CD4-positive, alpha-beta memory T cell (primary cell): ENCODE measurements at regions of chr2 and their contacts with region 1.

Region 1: GRCh38 chr2:98664327-98664726 is 55.9 kb downstream of the UNC50 start:
- DNase-seq: peak; percentile 71 to 81 (median 78)
- H3K4me3 ChIP-seq: peak overlapping the region in 1 of 2 donors; percentile 54
- H3K4me3 Mint-ChIP-seq: peak overlapping the region; percentile 59 to 91 (median 84)
- H3K27ac ChIP-seq: peak overlapping the region; percentile 51
- H3K27ac Mint-ChIP-seq: peak overlapping the region; percentile 85 to 99 (median 92)
- H3K4me1 ChIP-seq: peaks cover 74% of the 10 kb centered on the region
- H3K4me1 Mint-ChIP-seq: peaks cover 52 to 91% (median 69%) of the 10 kb centered on the region in 4 donors
- H3K27me3 ChIP-seq: no peaks in the 10 kb centered on the region
- H3K27me3 Mint-ChIP-seq: no peaks in the 10 kb centered on the region

Region 2: GRCh38 chr2:98577313-98577712 is 87.0 kb before region 1 on chr2:
- CTCF ChIA-PET with region 1: no interaction called
- POLR2A ChIA-PET with region 1: no interaction called
- intact Hi-C with region 1: no loop called
- DNase-seq: no peak
- H3K4me3 ChIP-seq: no peak overlapping the region
- H3K4me3 Mint-ChIP-seq: no peak overlapping the region
- H3K27ac ChIP-seq: no peak overlapping the region
- H3K27ac Mint-ChIP-seq: peak overlapping the region in 4 of 7 donors; percentile 11 to 46 (median 30)
- H3K4me1 ChIP-seq: no peaks in the 10 kb centered on the region
- H3K4me1 Mint-ChIP-seq: peaks cover 0 to 1% (median 0%) of the 10 kb centered on the region in 4 donors
- H3K27me3 ChIP-seq: no peaks in the 10 kb centered on the region
- H3K27me3 Mint-ChIP-seq: no peaks in the 10 kb centered on the region

Region 3: DNA sequence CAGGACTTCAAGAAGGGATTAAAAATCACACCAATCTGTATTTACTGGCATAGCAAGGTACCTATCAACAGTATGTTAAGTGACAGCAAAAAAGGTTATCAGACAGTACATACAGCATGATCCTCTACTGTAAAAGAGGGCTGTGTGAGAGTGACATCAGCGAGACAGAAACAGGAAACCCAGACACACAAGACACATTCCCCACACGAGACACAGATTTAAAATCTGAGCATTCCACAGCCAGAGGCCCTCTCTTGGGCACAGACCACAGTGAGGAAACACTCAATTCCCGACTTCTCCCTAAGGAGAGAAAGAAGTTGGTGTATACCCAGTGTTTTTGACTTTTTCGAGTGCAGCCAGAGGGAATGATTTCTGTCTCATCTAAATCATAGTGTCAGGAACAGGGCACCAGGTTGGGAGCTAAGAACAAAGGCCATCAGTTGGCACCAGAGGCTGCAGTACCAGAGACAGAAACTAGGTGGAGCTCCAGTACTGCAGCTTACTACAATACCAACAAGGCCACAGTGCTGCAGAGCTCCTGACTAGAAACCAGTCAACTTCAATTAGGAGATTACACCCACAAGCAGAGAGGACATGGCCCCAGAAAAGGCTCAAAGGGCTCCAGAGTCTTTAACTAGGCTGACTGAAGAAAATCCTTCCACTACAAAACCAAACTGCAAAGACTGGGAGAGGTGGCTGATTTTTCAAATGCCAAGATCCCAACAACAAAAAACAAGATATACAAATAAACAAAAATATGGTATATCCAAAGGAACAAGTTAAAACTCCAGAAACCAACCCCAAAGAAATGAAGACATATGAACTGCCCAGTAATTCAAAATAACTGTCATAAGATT is 15.0 kb before region 1 on chr2:
- CTCF ChIA-PET with region 1: interaction called, 8 read pairs
- POLR2A ChIA-PET with region 1: interaction called, 12 read pairs
- intact Hi-C with region 1: loop called (anchors 1 kb)
- DNase-seq: peak; percentile 79 to 85 (median 81)
- H3K4me3 ChIP-seq: no peak overlapping the region
- H3K4me3 Mint-ChIP-seq: peak overlapping the region in 5 of 8 donors; percentile 10 to 73 (median 33)
- H3K27ac ChIP-seq: peak overlapping the region; percentile 10
- H3K27ac Mint-ChIP-seq: peak overlapping the region; percentile 66 to 89 (median 84)
- H3K4me1 ChIP-seq: peaks cover 52% of the 10 kb centered on the region
- H3K4me1 Mint-ChIP-seq: peaks cover 45 to 60% (median 54%) of the 10 kb centered on the region in 4 donors
- H3K27me3 ChIP-seq: no peaks in the 10 kb centered on the region
- H3K27me3 Mint-ChIP-seq: no peaks in the 10 kb centered on the region

Region 4: GRCh38 chr2:98674233-98674964 is 10.1 kb after region 1 on chr2:
- CTCF ChIA-PET with region 1: no interaction called
- POLR2A ChIA-PET with region 1: interaction called, 18 read pairs
- intact Hi-C with region 1: no loop called
- DNase-seq: no peak
- H3K4me3 ChIP-seq: no peak overlapping the region
- H3K4me3 Mint-ChIP-seq: peak overlapping the region in 2 of 8 donors; percentile 26 to 43
- H3K27ac ChIP-seq: peak overlapping the region; percentile 18
- H3K27ac Mint-ChIP-seq: peak overlapping the region; percentile 67 to 87 (median 80)
- H3K4me1 ChIP-seq: peaks cover 20% of the 10 kb centered on the region
- H3K4me1 Mint-ChIP-seq: peaks cover 27 to 59% (median 48%) of the 10 kb centered on the region in 4 donors
- H3K27me3 ChIP-seq: no peaks in the 10 kb centered on the region
- H3K27me3 Mint-ChIP-seq: no peaks in the 10 kb centered on the region

Region 5: DNA sequence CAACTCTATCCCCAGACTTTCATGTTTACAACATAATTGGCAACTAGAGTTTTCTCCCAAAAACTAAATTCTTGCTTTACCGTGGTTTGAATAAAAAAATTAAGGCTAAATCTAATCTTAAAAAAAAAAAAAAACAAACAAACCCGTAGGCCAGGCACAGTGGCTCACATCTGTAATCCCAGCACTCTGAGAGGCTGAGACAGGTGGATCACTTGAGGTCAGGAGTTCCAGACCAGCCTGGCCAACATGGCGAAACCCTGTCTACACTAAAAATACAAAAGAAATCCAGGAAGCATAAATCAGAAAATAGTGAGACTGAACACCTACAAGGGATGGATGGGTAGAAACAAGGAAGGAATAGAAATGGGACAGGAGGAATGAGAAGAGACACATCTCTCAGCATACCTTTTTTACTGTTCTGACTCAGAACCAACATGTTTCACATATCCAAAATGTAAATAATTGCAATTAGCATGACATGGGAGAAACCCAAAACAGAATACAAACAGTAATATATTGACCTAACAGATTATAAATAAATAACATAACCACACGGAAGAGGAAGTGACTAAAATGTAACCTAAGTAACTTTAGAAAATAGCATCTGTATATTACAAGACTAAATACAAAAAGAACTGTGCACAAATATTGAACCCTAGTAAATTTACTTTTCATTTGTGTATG is 49.1 kb after region 1 on chr2:
- CTCF ChIA-PET with region 1: interaction called, 3 read pairs
- POLR2A ChIA-PET with region 1: interaction called, 10 read pairs
- intact Hi-C with region 1: no loop called
- DNase-seq: no peak
- H3K4me3 ChIP-seq: no peak overlapping the region
- H3K4me3 Mint-ChIP-seq: peak overlapping the region in 7 of 8 donors; percentile 25 to 76 (median 65)
- H3K27ac ChIP-seq: no peak overlapping the region
- H3K27ac Mint-ChIP-seq: peak overlapping the region; percentile 42 to 89 (median 81)
- H3K4me1 ChIP-seq: peaks cover 99% of the 10 kb centered on the region
- H3K4me1 Mint-ChIP-seq: peaks cover 72 to 98% (median 87%) of the 10 kb centered on the region in 4 donors
- H3K27me3 ChIP-seq: no peaks in the 10 kb centered on the region
- H3K27me3 Mint-ChIP-seq: no peaks in the 10 kb centered on the region

Region 6: GRCh38 chr2:98757904-98758421 is 93.6 kb after region 1 on chr2:
- CTCF ChIA-PET with region 1: interaction called, 4 read pairs
- POLR2A ChIA-PET with region 1: interaction called, 10 read pairs
- intact Hi-C with region 1: no loop called
- DNase-seq: peak; percentile 68 to 87 (median 71)
- H3K4me3 ChIP-seq: peak overlapping the region in 1 of 2 donors; percentile 37
- H3K4me3 Mint-ChIP-seq: peak overlapping the region; percentile 68 to 95 (median 84)
- H3K27ac ChIP-seq: peak overlapping the region; percentile 68
- H3K27ac Mint-ChIP-seq: peak overlapping the region; percentile 93 to 99 (median 97)
- H3K4me1 ChIP-seq: peaks cover 69% of the 10 kb centered on the region
- H3K4me1 Mint-ChIP-seq: peaks cover 57 to 86% (median 71%) of the 10 kb centered on the region in 4 donors
- H3K27me3 ChIP-seq: no peaks in the 10 kb centered on the region
- H3K27me3 Mint-ChIP-seq: no peaks in the 10 kb centered on the region

Region 7: GRCh38 chr2:98822301-98823164 is 158.2 kb after region 1 on chr2:
- CTCF ChIA-PET with region 1: no interaction called
- POLR2A ChIA-PET with region 1: interaction called, 12 read pairs
- intact Hi-C with region 1: no loop called
- DNase-seq: peak; percentile 51 to 70 (median 64)
- H3K4me3 ChIP-seq: peak overlapping the region in 1 of 2 donors; percentile 43
- H3K4me3 Mint-ChIP-seq: peak overlapping the region in 5 of 8 donors; percentile 22 to 76 (median 54)
- H3K27ac ChIP-seq: peak overlapping the region; percentile 39
- H3K27ac Mint-ChIP-seq: no peak overlapping the region
- H3K4me1 ChIP-seq: peaks cover 20% of the 10 kb centered on the region
- H3K4me1 Mint-ChIP-seq: peaks cover 23 to 53% (median 36%) of the 10 kb centered on the region in 4 donors
- H3K27me3 ChIP-seq: no peaks in the 10 kb centered on the region
- H3K27me3 Mint-ChIP-seq: peaks cover 0 to 1% of the 10 kb centered on the region in 2 donors

Region 8: GRCh38 chr2:98835831-98836385 is 171.6 kb after region 1 on chr2:
- CTCF ChIA-PET with region 1: interaction called, 12 read pairs
- POLR2A ChIA-PET with region 1: interaction called, 10 read pairs
- intact Hi-C with region 1: no loop called
- DNase-seq: peak; percentile 66 to 88 (median 79)
- H3K4me3 ChIP-seq: peak overlapping the region in 1 of 2 donors; percentile 22
- H3K4me3 Mint-ChIP-seq: peak overlapping the region; percentile 43 to 77 (median 64)
- H3K27ac ChIP-seq: peak overlapping the region; percentile 54
- H3K27ac Mint-ChIP-seq: peak overlapping the region; percentile 88 to 99 (median 97)
- H3K4me1 ChIP-seq: peaks cover 40% of the 10 kb centered on the region
- H3K4me1 Mint-ChIP-seq: peaks cover 36 to 53% (median 44%) of the 10 kb centered on the region in 4 donors
- H3K27me3 ChIP-seq: no peaks in the 10 kb centered on the region
- H3K27me3 Mint-ChIP-seq: no peaks in the 10 kb centered on the region